Endothelial cell of umbilical vein (primary cell): ENCODE measurements at regions of chr14 and their contacts with region 1.

Region 1: GRCh38 chr14:33839193-33840076 is 111.4 kb downstream of the EGLN3 start:
- DNase-seq: peak; percentile 37
- H3K4me3 ChIP-seq: no peak overlapping the region
- H3K27ac ChIP-seq: no peak overlapping the region
- H3K4me1 ChIP-seq: no peaks in the 10 kb centered on the region
- H3K27me3 ChIP-seq: peaks cover 1 to 4% of the 10 kb centered on the region in 2 experiments
- CTCF ChIP-seq: peak; percentile 72 to 77
- POLR2A ChIP-seq: no peak

Region 2: DNA sequence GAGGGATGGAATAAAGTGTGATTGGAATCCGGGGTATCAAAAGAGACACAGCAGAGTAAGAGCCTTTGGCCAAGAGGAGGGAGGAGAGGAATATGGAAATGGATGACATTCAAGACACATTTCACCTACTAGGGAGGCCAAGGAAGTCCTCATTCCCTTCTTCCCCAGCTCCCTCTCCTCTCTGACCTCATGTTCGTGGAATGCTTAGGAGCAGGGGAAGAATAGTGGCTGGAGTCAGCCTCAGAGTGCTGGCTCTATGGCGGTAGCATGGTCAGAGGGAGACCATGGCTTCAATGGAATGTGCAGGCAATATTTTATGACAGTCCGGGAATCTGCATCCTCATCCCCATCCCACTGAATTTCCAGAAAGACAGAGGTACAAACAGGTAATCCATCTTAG is 85.2 kb before region 1 on chr14:
- CTCF ChIA-PET with region 1: no interaction called
- POLR2A ChIA-PET with region 1: no interaction called
- dilution Hi-C with region 1: no loop called
- intact Hi-C with region 1: no loop called
- DNase-seq: no peak
- H3K4me3 ChIP-seq: no peak overlapping the region
- H3K27ac ChIP-seq: no peak overlapping the region
- H3K4me1 ChIP-seq: no peaks in the 10 kb centered on the region
- H3K27me3 ChIP-seq: no peaks in the 10 kb centered on the region
- CTCF ChIP-seq: no peak
- POLR2A ChIP-seq: no peak

Region 3: DNA sequence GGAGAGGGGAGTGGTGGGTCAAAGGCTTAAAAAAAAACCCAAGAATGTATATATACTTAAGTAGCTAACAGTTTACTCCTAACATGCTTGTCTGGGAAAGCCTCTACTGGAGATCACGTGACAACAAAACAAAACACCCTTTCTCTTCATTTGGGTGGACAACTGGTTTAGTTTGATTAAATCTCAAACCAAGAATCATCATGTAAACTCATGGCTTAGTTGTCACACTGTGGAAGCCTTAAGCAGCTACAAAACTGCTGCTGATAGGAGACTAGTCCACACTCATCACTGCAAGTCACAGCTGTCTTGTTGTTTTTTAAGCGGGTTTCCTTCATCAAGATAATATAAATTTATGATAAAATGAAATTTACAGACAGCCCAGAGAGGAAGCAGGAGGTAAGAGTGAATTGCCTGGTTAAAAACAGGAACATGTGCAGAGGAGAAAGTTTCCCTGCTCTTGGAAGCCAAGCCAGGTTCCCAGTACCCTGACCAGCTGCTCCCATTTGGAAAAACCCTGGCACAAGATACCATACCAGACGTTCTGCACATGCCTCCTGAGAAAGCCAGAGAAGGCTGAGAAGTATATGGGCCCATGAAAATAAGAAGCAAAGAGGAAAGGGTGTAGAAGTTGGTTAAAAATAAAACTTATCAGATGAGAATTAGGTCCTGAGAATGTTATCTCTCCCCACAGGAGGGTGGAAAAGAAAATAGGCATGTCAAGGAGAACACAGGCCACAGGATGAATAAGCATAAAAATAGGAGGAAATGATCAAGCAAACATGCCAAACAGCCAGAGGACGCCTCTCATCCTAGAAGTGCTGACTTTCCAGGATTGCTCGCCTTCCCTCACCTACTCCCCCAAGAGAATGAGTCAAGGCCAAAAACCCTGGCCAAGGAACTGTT is 77.5 kb after region 1 on chr14:
- CTCF ChIA-PET with region 1: no interaction called
- POLR2A ChIA-PET with region 1: no interaction called
- dilution Hi-C with region 1: no loop called
- intact Hi-C with region 1: no loop called
- DNase-seq: peak; percentile 88
- H3K4me3 ChIP-seq: no peak overlapping the region
- H3K27ac ChIP-seq: peak overlapping the region; percentile 79
- H3K4me1 ChIP-seq: peaks cover 32% of the 10 kb centered on the region
- H3K27me3 ChIP-seq: no peaks in the 10 kb centered on the region
- CTCF ChIP-seq: no peak
- POLR2A ChIP-seq: no peak

Region 4: GRCh38 chr14:34220921-34221320 is 381.5 kb after region 1 on chr14:
- CTCF ChIA-PET with region 1: interaction called, 13 read pairs
- POLR2A ChIA-PET with region 1: no interaction called
- dilution Hi-C with region 1: no loop called
- intact Hi-C with region 1: no loop called
- DNase-seq: no peak
- H3K4me3 ChIP-seq: no peak overlapping the region
- H3K27ac ChIP-seq: no peak overlapping the region
- H3K4me1 ChIP-seq: no peaks in the 10 kb centered on the region
- H3K27me3 ChIP-seq: peaks cover 2 to 3% of the 10 kb centered on the region in 2 experiments
- CTCF ChIP-seq: no peak
- POLR2A ChIP-seq: no peak

Region 5: DNA sequence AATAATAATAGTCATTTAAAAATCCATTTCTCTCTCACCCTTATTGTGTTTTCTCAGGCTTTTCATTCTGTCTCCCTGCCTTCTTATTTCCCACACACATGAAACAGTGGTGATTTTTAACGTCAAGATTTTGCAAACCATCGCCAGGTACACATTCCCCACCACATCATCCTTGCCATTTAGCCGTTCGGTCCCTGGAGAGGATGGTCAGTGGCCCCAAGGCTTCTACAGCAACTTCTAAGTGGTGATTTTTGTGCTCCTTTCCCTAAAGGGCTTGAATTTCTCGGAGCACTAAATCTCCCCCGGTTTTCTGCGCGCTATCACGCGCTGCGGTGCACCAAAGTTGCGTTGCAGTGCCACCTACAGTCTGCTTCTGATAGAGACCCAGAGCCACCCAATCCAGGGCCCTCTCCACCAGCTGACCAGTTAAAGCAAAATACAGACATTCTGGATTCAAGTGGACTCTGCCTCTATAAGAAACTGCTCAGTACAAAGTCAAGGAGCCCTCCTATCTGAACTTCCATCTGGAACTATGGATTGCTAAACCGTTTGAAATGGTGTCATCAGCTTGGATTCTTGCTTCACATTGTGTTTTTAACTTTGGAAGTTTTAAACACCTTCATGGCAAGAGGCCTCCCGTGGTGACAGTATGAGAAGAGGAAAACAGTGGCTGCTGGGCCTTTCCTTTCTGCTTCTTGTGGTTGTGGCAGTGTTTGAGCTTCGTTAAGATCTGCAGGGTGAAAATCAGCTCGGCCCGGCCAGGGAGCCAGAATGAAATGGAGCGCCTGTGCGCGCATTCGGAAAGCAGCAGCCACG is 388.6 kb after region 1 on chr14:
- CTCF ChIA-PET with region 1: interaction called, 27 read pairs
- POLR2A ChIA-PET with region 1: no interaction called
- dilution Hi-C with region 1: no loop called
- intact Hi-C with region 1: loop called (anchors 1 kb)
- DNase-seq: peak; percentile 50
- H3K4me3 ChIP-seq: no peak overlapping the region
- H3K27ac ChIP-seq: no peak overlapping the region
- H3K4me1 ChIP-seq: no peaks in the 10 kb centered on the region
- H3K27me3 ChIP-seq: peaks cover 3 to 4% of the 10 kb centered on the region in 2 experiments
- CTCF ChIP-seq: peak; percentile 74 to 83
- POLR2A ChIP-seq: no peak

Region 6: GRCh38 chr14:34300882-34301734 is 461.7 kb after region 1 on chr14:
- CTCF ChIA-PET with region 1: interaction called, 26 read pairs
- POLR2A ChIA-PET with region 1: no interaction called
- dilution Hi-C with region 1: no loop called
- intact Hi-C with region 1: loop called (anchors 1 kb)
- DNase-seq: peak; percentile 49
- H3K4me3 ChIP-seq: no peak overlapping the region
- H3K27ac ChIP-seq: no peak overlapping the region
- H3K4me1 ChIP-seq: no peaks in the 10 kb centered on the region
- H3K27me3 ChIP-seq: peaks cover 0 to 2% of the 10 kb centered on the region in 2 experiments
- CTCF ChIP-seq: peak; percentile 43 to 45
- POLR2A ChIP-seq: no peak